ENCODE measurements at regions of chr3 and their contacts with region 1.

Region 1: GRCh38 chr3:139319428-139320402 is 24.1 kb upstream of the MRPS22 start:
- DNase-seq: peak; percentile 36 to 85
- H3K4me3 ChIP-seq: no peak overlapping the region
- H3K27ac ChIP-seq: no peak overlapping the region
- H3K4me1 ChIP-seq: peaks cover 0 to 2% (median 0%) of the 10 kb centered on the region in 4 experiments; a peak in 2 of 7 replicates
- H3K27me3 ChIP-seq: no peaks in the 10 kb centered on the region
- CTCF ChIP-seq: peak; percentile 77 to 95 (median 79)
- EP300 ChIP-seq: no peak
- POLR2A ChIP-seq: no peak
- RAD21 ChIP-seq: peak; percentile 47 to 66; a peak in 3 of 4 replicates

Region 2: GRCh38 chr3:139222100-139222657 is 97.5 kb before region 1 on chr3:
- CTCF ChIA-PET with region 1: no interaction called
- POLR2A ChIA-PET with region 1: no interaction called
- DNase-seq: peak in 1 of 2 experiments; percentile 19
- H3K4me3 ChIP-seq: no peak overlapping the region
- H3K27ac ChIP-seq: no peak overlapping the region
- H3K4me1 ChIP-seq: no peaks in the 10 kb centered on the region
- H3K27me3 ChIP-seq: no peaks in the 10 kb centered on the region; a peak in 1 of 7 replicates
- CTCF ChIP-seq: no peak
- EP300 ChIP-seq: no peak
- POLR2A ChIP-seq: no peak
- RAD21 ChIP-seq: no peak

Region 3: GRCh38 chr3:139302084-139302800 is 17.5 kb before region 1 on chr3:
- CTCF ChIA-PET with region 1: interaction called, 103 read pairs
- POLR2A ChIA-PET with region 1: no interaction called
- DNase-seq: no peak
- H3K4me3 ChIP-seq: no peak overlapping the region
- H3K27ac ChIP-seq: no peak overlapping the region
- H3K4me1 ChIP-seq: no peaks in the 10 kb centered on the region; a peak in 3 of 7 replicates
- H3K27me3 ChIP-seq: no peaks in the 10 kb centered on the region
- CTCF ChIP-seq: no peak
- EP300 ChIP-seq: no peak
- POLR2A ChIP-seq: no peak
- RAD21 ChIP-seq: no peak